HepG2 (cell line): ENCODE measurements at regions of chr16 and their contacts with region 1.

Region 1: GRCh38 chr16:24151482-24151939 is 104.6 kb upstream of the CACNG3 start:
- DNase-seq: no peak
- ATAC-seq: no peak
- H3K4me3 ChIP-seq: no peak overlapping the region
- H3K27ac ChIP-seq: no peak overlapping the region
- H3K4me1 ChIP-seq: no peaks in the 10 kb centered on the region
- H3K27me3 ChIP-seq: peaks cover 0 to 10% of the 10 kb centered on the region in 2 experiments; a peak in 3 of 5 replicates
- CTCF ChIP-seq: no peak
- EP300 ChIP-seq: no peak
- POLR2A ChIP-seq: no peak
- RAD21 ChIP-seq: no peak

Region 2: DNA sequence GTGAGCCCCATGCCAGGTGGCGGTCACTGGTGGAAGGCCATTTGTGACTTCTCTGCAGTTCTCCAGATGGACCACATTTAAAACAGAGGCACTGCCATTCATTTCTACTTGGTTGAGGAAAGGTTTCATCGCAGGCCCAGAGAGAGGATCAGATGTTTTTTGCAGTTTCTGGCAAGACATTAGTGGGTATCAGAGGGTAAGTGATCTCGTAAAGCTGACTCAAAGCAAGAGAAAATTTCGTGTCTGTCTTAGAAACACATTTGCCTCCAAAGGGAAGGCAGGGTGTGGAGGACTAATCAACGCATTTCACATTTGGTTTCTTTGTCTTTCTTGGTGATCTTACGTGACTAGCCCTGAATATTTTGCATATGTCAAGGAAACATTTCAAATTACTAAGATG is 233.9 kb before region 1 on chr16:
- CTCF ChIA-PET with region 1: no interaction called
- POLR2A ChIA-PET with region 1: no interaction called
- in situ Hi-C with region 1: loop called (anchors 10 kb)
- intact Hi-C with region 1: no loop called
- DNase-seq: no peak
- ATAC-seq: no peak
- H3K4me3 ChIP-seq: no peak overlapping the region
- H3K27ac ChIP-seq: no peak overlapping the region
- H3K4me1 ChIP-seq: no peaks in the 10 kb centered on the region
- H3K27me3 ChIP-seq: no peaks in the 10 kb centered on the region
- CTCF ChIP-seq: no peak
- EP300 ChIP-seq: no peak
- POLR2A ChIP-seq: no peak
- RAD21 ChIP-seq: no peak

Region 3: DNA sequence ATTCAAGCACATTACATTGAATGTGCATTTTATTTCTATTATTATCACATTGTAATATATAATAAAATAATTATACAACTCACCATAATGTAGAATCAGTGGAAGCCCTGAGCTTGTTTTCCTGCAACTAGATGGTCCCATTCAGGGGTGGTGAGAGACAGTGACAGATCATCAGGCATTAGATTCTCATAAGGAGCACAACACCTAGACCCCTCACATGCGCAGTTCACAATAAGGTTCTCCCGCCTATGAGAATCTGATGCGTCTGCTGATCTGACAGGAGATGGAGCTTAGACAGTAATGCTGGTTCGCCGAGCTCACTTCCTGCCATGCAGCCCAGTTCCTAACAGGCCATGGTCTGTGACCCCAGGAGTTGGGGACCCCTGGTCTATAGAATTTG is 291.1 kb after region 1 on chr16:
- CTCF ChIA-PET with region 1: no interaction called
- POLR2A ChIA-PET with region 1: no interaction called
- in situ Hi-C with region 1: no loop called
- intact Hi-C with region 1: no loop called
- DNase-seq: no peak
- ATAC-seq: no peak
- H3K4me3 ChIP-seq: no peak overlapping the region
- H3K27ac ChIP-seq: no peak overlapping the region
- H3K4me1 ChIP-seq: no peaks in the 10 kb centered on the region
- H3K27me3 ChIP-seq: peaks cover 0 to 19% of the 10 kb centered on the region in 2 experiments; a peak in 3 of 5 replicates
- CTCF ChIP-seq: no peak
- EP300 ChIP-seq: no peak
- POLR2A ChIP-seq: no peak
- RAD21 ChIP-seq: no peak